ENCODE measurements at regions of chr17 and their contacts with region 1.

Region 1: GRCh38 chr17:70447588-70447987 is 278.3 kb downstream of the KCNJ2 start:
- DNase-seq: no peak

Region 2: DNA sequence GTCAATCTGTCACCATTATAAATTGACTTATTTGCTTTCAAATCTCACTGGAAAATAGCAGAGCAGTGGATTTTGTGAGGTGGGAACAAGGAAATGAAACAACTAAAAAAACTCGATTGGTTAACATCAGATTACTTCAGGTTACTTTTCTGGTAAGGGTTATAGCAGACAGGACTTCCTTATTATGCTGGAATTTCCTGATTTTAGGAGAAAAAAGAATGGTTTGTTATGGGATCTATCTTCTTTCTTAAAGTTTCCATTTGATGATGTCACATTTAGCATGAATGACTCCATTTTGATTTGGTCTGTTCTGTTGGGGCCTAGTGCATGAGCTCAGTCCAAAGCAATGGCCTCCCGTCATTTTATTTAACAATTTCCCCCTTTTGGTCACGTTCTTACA is 67.6 kb before region 1 on chr17:
- intact Hi-C with region 1: loop called (anchors 10 kb)
- DNase-seq: no peak

Region 3: GRCh38 chr17:70499067-70499786 is 51.6 kb after region 1 on chr17:
- intact Hi-C with region 1: no loop called
- DNase-seq: no peak

Region 4: GRCh38 chr17:70510288-70510687 is 62.7 kb after region 1 on chr17:
- intact Hi-C with region 1: no loop called
- DNase-seq: no peak

Region 5: GRCh38 chr17:71110326-71110725 is 662.7 kb after region 1 on chr17:
- intact Hi-C with region 1: no loop called
- DNase-seq: no peak